Activated T-helper 1 cell treated with anti-CD3 and anti-CD28 coated beads, Interleukin-12 subunit alpha, Interleukin-12 subunit beta, Interleukin-2, Interleukin-4 antibody, amounts not matched to agents 30 ng/mL and 10 ng/mL and 1 ng/mL, durations not matched to agents 14 hours and 24 hours and 36 hours (primary cell): ENCODE measurements at regions of chr16 and their contacts with region 1.

Region 1: GRCh38 chr16:1610276-1611017 is 1.4 kb downstream of the IFT140 start:
- DNase-seq: peak; percentile 90
- H3K4me3 Mint-ChIP-seq: peak overlapping the region; percentile 91
- H3K27ac Mint-ChIP-seq: peak overlapping the region; percentile 100
- H3K4me1 Mint-ChIP-seq: peaks cover 30% of the 10 kb centered on the region
- H3K27me3 Mint-ChIP-seq: no peaks in the 10 kb centered on the region

Region 2: GRCh38 chr16:401468-402348 is 1208.7 kb before region 1 on chr16 and contains the start of gene DECR2:
- intact Hi-C with region 1: loop called (anchors 5 kb)
- DNase-seq: peak; percentile 90
- H3K4me3 Mint-ChIP-seq: peak within 1 kb of the TSS; percentile 87
- H3K27ac Mint-ChIP-seq: peak within 1 kb of the TSS; percentile 58
- H3K4me1 Mint-ChIP-seq: peaks cover 11% of the 10 kb centered on the region
- H3K27me3 Mint-ChIP-seq: peaks cover 2% of the 10 kb centered on the region
- total RNA-seq, gene DECR2: 18.0 and 20.1 TPM in 2 replicates

Region 3: DNA sequence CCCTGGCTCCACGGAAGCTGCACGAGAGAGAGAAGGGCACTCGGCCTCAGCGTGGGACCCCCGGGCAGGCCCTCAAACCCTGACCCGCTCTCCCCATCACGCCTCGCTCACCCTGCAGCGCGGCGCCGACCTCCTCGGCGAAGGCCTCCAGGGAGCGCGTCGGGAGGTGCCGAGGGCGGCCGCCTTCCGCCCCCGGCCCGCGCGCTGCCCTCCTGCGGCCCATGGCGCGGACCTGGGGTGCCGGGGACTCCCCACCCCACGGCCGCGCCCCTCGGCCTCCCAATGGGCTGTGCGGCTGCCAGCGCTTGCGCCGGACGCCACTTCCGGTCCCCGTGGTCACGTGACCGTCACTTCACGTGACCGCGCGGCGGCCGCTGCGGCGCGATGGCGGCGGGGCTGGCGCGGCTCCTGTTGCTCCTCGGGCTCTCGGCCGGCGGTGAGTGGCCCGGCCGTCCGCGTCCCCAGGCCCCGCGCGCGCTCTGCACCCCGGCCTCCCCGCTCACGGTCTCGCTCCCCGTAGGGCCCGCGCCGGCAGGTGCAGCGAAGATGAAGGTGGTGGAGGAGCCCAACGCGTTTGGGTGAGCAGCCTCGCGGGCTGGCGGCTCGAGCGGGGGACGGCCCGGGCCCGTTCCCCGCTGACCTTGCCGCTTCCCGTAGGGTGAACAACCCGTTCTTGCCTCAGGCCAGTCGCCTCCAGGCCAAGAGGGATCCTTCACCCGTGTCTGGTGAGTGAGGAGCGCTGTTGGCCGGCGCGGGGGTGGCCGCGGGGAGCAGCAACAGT is 258.7 kb before region 1 on chr16 and contains the starts of genes GNPTG and TSR3:
- intact Hi-C with region 1: loop called (anchors 5 kb)
- DNase-seq: peak; percentile 89
- H3K4me3 Mint-ChIP-seq: peak within 1 kb of the TSS; percentile 90
- H3K27ac Mint-ChIP-seq: peak within 1 kb of the TSS; percentile 83
- H3K4me1 Mint-ChIP-seq: peaks cover 18% of the 10 kb centered on the region
- H3K27me3 Mint-ChIP-seq: peaks cover 3% of the 10 kb centered on the region
- total RNA-seq, gene GNPTG: 21.4 and 22.5 TPM in 2 replicates
- total RNA-seq, gene TSR3: 87.4 and 89.4 TPM in 2 replicates

Region 4: GRCh38 chr16:1492923-1493745 is 117.3 kb before region 1 on chr16 and contains the start of gene TELO2:
- intact Hi-C with region 1: loop called (anchors 1 kb)
- DNase-seq: peak; percentile 85
- H3K4me3 Mint-ChIP-seq: peak within 1 kb of the TSS; percentile 92
- H3K27ac Mint-ChIP-seq: peak within 1 kb of the TSS; percentile 98
- H3K4me1 Mint-ChIP-seq: peaks cover 8% of the 10 kb centered on the region
- H3K27me3 Mint-ChIP-seq: no peaks in the 10 kb centered on the region
- total RNA-seq, gene TELO2: 94.1 and 95.3 TPM in 2 replicates

Region 5: DNA sequence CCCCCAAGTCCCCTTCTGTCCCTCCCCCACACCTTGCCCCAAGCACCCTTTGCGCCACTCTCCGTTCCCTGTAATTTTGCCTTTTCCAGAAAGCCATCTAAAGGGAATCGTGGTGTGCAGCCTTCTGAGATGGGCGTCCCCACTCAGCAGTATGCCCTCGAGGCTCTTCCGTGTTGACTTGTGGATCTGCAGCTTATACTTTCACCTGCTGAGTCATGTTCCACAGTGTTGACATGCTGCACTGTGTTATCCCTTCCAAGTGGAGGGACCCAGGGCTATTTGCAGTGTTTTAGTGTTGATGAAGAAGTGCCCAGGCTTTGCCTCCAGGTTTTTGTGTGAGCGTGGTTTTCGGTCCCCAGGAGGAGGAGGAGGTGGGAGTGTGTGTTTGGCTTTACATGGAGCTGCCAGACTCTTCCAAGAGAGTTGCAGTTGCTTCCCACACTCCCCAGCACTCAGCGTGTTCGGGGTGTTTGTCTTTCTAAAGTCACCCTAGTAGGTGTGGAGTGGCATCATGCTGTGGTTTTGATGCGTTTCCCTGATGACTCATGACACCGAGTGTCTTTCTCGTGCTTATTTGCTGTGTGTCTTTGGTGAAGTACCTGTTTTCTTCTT is 35.6 kb after region 1 on chr16:
- intact Hi-C with region 1: loop called (anchors 5 kb)
- DNase-seq: peak; percentile 38
- H3K4me3 Mint-ChIP-seq: peak overlapping the region; percentile 12
- H3K27ac Mint-ChIP-seq: peak overlapping the region; percentile 80
- H3K4me1 Mint-ChIP-seq: peaks cover 23% of the 10 kb centered on the region
- H3K27me3 Mint-ChIP-seq: no peaks in the 10 kb centered on the region

Region 6: DNA sequence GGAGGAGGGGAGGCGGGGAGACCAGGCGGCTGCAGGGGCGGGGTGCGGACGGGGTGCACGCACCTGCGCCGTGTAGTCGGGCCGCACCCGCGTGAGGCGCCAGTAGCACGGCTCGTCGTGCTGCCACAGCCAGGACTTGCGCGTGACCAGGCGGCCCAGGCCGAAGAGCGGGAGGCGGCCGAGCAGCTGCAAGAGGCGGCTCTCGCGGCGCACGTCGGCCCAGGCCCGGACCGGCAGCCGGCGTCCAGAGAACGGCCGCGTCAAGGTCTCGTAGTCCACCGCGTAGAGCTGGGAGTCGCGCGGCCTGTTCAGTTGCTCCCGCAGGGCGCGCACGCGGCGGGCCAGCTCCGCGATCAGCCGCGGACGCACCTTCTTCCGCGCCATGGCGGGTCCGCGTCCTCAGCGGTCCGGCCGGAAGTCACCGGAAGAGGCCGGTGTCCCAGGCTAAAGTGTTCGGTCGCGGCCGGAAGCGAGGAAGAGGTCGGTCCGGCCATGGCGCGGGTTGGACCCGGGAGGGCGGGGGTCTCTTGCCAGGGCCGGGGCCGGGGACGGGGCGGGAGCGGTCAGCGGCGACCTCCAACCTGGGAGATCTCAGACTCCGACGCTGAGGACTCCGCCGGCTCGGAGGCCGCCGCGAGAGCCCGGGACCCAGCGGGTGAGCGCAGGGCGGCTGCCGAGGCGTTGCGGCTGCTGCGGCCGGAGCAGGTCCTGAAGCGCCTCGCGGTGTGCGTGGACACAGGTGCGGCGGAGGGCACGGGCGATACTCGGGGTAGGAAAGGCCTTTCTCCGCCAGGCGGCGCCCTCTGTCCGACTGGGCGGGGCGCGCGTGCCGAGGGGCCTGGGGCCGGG is 162.5 kb after region 1 on chr16 and contains the starts of genes EME2 and MRPS34:
- intact Hi-C with region 1: loop called (anchors 2 kb)
- DNase-seq: peak; percentile 82
- H3K4me3 Mint-ChIP-seq: peak within 1 kb of the TSS; percentile 100
- H3K27ac Mint-ChIP-seq: peak within 1 kb of the TSS; percentile 98
- H3K4me1 Mint-ChIP-seq: peaks cover 8% of the 10 kb centered on the region
- H3K27me3 Mint-ChIP-seq: no peaks in the 10 kb centered on the region
- total RNA-seq, gene EME2: 31.0 and 32.7 TPM in 2 replicates
- total RNA-seq, gene MRPS34: 209 and 215 TPM in 2 replicates

Region 7: GRCh38 chr16:2155091-2156021 is 544.9 kb after region 1 on chr16 and contains the start of gene TRAF7:
- intact Hi-C with region 1: loop called (anchors 5 kb)
- DNase-seq: peak; percentile 98
- H3K4me3 Mint-ChIP-seq: peak within 1 kb of the TSS; percentile 99
- H3K27ac Mint-ChIP-seq: peak within 1 kb of the TSS; percentile 93
- H3K4me1 Mint-ChIP-seq: peaks cover 24% of the 10 kb centered on the region
- H3K27me3 Mint-ChIP-seq: no peaks in the 10 kb centered on the region
- total RNA-seq, gene TRAF7: 70.4 and 73.1 TPM in 2 replicates